ENCODE measurements at regions of chr4 and their contacts with region 1.

Region 1: GRCh38 chr4:90786602-90787001 is 659.4 kb downstream of the CCSER1 start:
- DNase-seq: no peak
- ATAC-seq: no peak
- H3K4me3 ChIP-seq: no peak overlapping the region
- H3K27ac ChIP-seq: no peak overlapping the region
- H3K4me1 ChIP-seq: no peaks in the 10 kb centered on the region
- H3K27me3 ChIP-seq: no peaks in the 10 kb centered on the region
- CTCF ChIP-seq: no peak
- EP300 ChIP-seq: no peak
- POLR2A ChIP-seq: no peak
- RAD21 ChIP-seq: no peak

Region 2: GRCh38 chr4:90825849-90826248 is 39.2 kb after region 1 on chr4:
- CTCF ChIA-PET with region 1: no interaction called
- POLR2A ChIA-PET with region 1: no interaction called
- in situ Hi-C with region 1: no loop called
- intact Hi-C with region 1: no loop called
- DNase-seq: no peak
- ATAC-seq: no peak
- H3K4me3 ChIP-seq: no peak overlapping the region
- H3K27ac ChIP-seq: no peak overlapping the region
- H3K4me1 ChIP-seq: no peaks in the 10 kb centered on the region
- H3K27me3 ChIP-seq: no peaks in the 10 kb centered on the region; a peak in 1 of 5 replicates
- CTCF ChIP-seq: no peak
- EP300 ChIP-seq: no peak
- POLR2A ChIP-seq: no peak
- RAD21 ChIP-seq: no peak

Region 3: GRCh38 chr4:90842960-90843359 is 56.4 kb after region 1 on chr4:
- CTCF ChIA-PET with region 1: no interaction called
- POLR2A ChIA-PET with region 1: no interaction called
- in situ Hi-C with region 1: no loop called
- intact Hi-C with region 1: loop called (anchors 2 kb)
- DNase-seq: peak; percentile 85
- ATAC-seq: peak; percentile 99
- H3K4me3 ChIP-seq: no peak overlapping the region
- H3K27ac ChIP-seq: no peak overlapping the region
- H3K4me1 ChIP-seq: peaks cover 26% of the 10 kb centered on the region
- H3K27me3 ChIP-seq: no peaks in the 10 kb centered on the region
- CTCF ChIP-seq: no peak
- EP300 ChIP-seq: peak in 1 of 2 experiments; percentile 64; a peak in 2 of 4 replicates
- POLR2A ChIP-seq: no peak
- RAD21 ChIP-seq: no peak